AG04449 (cell line): ENCODE measurements at regions of chr5 and their contacts with region 1.

Region 1: GRCh38 chr5:73812962-73813588 is 187.1 kb downstream of the ARHGEF28 start:
- DNase-seq: no peak
- H3K4me3 ChIP-seq: no peak overlapping the region
- CTCF ChIP-seq: no peak

Region 2: DNA sequence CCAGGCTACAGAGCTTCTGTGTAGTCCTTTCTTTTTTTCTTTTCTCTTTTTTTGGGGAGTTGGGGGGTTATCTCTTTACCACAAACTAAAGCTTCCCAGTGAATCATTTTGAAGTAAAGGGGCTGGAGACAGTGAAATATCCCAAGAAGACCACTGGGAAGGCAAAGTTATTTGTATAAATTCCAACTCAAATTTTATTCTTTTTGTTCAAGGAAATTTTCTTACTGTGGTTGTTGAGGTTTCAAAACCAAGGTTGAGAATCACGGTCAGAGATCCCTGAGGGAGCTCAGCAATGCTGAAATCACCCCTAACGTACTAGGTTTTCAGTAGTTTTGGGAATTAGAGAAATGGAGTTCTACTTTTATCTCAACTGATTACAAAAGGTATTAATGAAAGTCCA is 11.4 kb before region 1 on chr5:
- CTCF ChIA-PET with region 1: interaction called, 51 read pairs
- POLR2A ChIA-PET with region 1: interaction called, 3 read pairs
- DNase-seq: no peak
- H3K4me3 ChIP-seq: no peak overlapping the region
- CTCF ChIP-seq: no peak

Region 3: GRCh38 chr5:73826301-73827105 is 13.4 kb after region 1 on chr5:
- CTCF ChIA-PET with region 1: interaction called, 4 read pairs
- POLR2A ChIA-PET with region 1: interaction called, 10 read pairs
- DNase-seq: peak; percentile 65
- H3K4me3 ChIP-seq: no peak overlapping the region
- CTCF ChIP-seq: no peak